Prostate gland (tissue), 2 donors: ENCODE measurements at regions of chr1 and their contacts with region 1.

Region 1: GRCh38 chr1:7127327-7128050 is 342.2 kb downstream of the CAMTA1 start:
- DNase-seq: no peak
- H3K4me3 ChIP-seq: no peak overlapping the region
- H3K27ac ChIP-seq: no peak overlapping the region
- H3K4me1 ChIP-seq: no peaks in the 10 kb centered on the region
- H3K27me3 ChIP-seq: no peaks in the 10 kb centered on the region
- CTCF ChIP-seq: no peak
- POLR2A ChIP-seq: no peak

Region 2: GRCh38 chr1:7172804-7173203 is 45.3 kb after region 1 on chr1:
- intact Hi-C with region 1: loop called (anchors 5 kb)
- DNase-seq: no peak
- H3K4me3 ChIP-seq: no peak overlapping the region
- H3K27ac ChIP-seq: no peak overlapping the region
- H3K4me1 ChIP-seq: no peaks in the 10 kb centered on the region
- H3K27me3 ChIP-seq: peaks cover 2% of the 10 kb centered on the region
- CTCF ChIP-seq: no peak
- POLR2A ChIP-seq: no peak